HEK293 (cell line): ENCODE measurements at regions of chr20 and their contacts with region 1.

Region 1: GRCh38 chr20:14189794-14190402 is 147.5 kb downstream of the FLRT3 start:
- H3K4me3 ChIP-seq: no peak overlapping the region
- H3K27ac ChIP-seq: no peak overlapping the region
- H3K4me1 ChIP-seq: no peaks in the 10 kb centered on the region
- CTCF ChIP-seq: no peak

Region 2: GRCh38 chr20:14142171-14142570 is 47.7 kb before region 1 on chr20:
- CTCF ChIA-PET with region 1: interaction called, 10 read pairs
- POLR2A ChIA-PET with region 1: no interaction called
- H3K4me3 ChIP-seq: no peak overlapping the region
- H3K27ac ChIP-seq: no peak overlapping the region
- H3K4me1 ChIP-seq: peaks cover 3% of the 10 kb centered on the region; the same call in 1 of the 2 replicates
- CTCF ChIP-seq: 0 out of 2 replicates have a peak, but pooled peaks have one; percentile 11